ENCODE measurements at regions of chr19 and their contacts with region 1.

Region 1: GRCh38 chr19:11624069-11624463 is 26.8 kb downstream of the ZNF627 start:
- DNase-seq: peak; percentile 34
- H3K4me3 ChIP-seq: peak overlapping the region; percentile 36
- H3K27ac ChIP-seq: no peak overlapping the region
- H3K4me1 ChIP-seq: peaks cover 10% of the 10 kb centered on the region
- H3K27me3 ChIP-seq: no peaks in the 10 kb centered on the region
- CTCF ChIP-seq: no peak

Region 2: GRCh38 chr19:11405846-11406643 is 218.0 kb before region 1 on chr19:
- CTCF ChIA-PET with region 1: no interaction called
- POLR2A ChIA-PET with region 1: no interaction called
- intact Hi-C with region 1: no loop called
- DNase-seq: no peak
- H3K4me3 ChIP-seq: no peak overlapping the region
- H3K27ac ChIP-seq: no peak overlapping the region
- H3K4me1 ChIP-seq: no peaks in the 10 kb centered on the region
- H3K27me3 ChIP-seq: no peaks in the 10 kb centered on the region
- CTCF ChIP-seq: no peak; the same call in 1 of the 2 replicates

Region 3: DNA sequence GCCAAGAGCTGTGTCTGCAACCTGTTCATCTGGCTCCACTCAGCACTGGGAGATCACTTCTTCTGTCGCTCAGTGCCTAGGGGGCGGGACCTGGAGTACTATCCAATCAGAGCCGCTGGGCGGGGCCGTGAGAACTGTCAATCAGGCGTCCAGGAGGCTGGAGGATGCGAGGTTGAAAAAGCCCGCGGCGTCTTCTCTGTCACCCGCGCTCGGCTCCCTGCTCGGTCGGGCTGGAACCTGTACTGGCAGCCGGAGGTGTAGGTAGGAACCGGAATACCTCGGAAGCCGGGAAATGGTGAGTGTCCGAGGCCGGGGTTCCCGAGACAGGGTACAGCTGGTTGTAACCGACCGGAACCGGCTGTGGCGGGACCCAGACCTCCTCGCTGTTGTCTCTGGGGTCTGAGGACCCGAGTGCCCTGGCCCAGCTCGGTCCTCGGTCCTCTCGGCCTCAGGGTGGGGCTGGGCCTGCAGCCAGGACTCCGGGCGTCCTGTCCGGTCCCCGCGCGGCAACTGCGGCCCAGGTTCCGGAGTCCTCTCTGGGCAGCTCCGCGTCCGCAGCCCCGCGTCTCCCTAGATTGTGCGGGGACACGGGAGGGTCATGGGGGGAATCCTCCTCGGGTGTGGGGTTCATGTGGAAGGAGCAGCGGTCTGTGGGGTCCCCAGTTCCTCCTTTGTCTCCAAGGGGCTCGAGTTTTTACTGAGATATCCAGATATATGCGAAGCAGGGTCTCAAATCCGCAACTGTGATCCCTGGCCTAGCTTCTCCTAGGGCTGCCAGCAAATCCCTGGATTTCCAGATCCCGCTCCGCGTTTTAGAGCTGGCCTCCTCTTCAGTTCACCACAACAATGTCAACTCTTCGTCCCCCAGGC is 15.8 kb after region 1 on chr19:
- CTCF ChIA-PET with region 1: interaction called, 10 read pairs
- POLR2A ChIA-PET with region 1: no interaction called
- intact Hi-C with region 1: no loop called
- DNase-seq: peak; percentile 99
- H3K4me3 ChIP-seq: peak overlapping the region; percentile 97
- H3K27ac ChIP-seq: peak overlapping the region; percentile 82
- H3K4me1 ChIP-seq: no peaks in the 10 kb centered on the region
- H3K27me3 ChIP-seq: no peaks in the 10 kb centered on the region
- CTCF ChIP-seq: no peak